Activated T-helper 2 cell treated with anti-CD3 and anti-CD28 coated beads, Interferon-gamma antibody, Interleukin-2, Interleukin-4, amounts not matched to agents 10 μg/mL and 5 μg/mL and 100 μg/mL, durations not matched to agents 14 hours and 24 hours and 36 hours (primary cell): ENCODE measurements at regions of chr11 and their contacts with region 1.

Region 1: GRCh38 chr11:118572061-118572980 is at the start of gene ARCN1:
- DNase-seq: peak; percentile 72
- H3K4me3 Mint-ChIP-seq: peak within 1 kb of the TSS; percentile 99
- H3K27ac Mint-ChIP-seq: peak within 1 kb of the TSS; percentile 97
- H3K4me1 Mint-ChIP-seq: peaks cover 29% of the 10 kb centered on the region
- H3K27me3 Mint-ChIP-seq: no peaks in the 10 kb centered on the region
- total RNA-seq, gene ARCN1: 132 and 133 TPM in 2 replicates

Region 2: GRCh38 chr11:118304568-118305248 is 267.6 kb before region 1 on chr11 and contains the start of gene CD3E:
- intact Hi-C with region 1: loop called (anchors 5 kb)
- DNase-seq: peak; percentile 64
- H3K4me3 Mint-ChIP-seq: peak within 1 kb of the TSS; percentile 89
- H3K27ac Mint-ChIP-seq: peak within 1 kb of the TSS; percentile 100
- H3K4me1 Mint-ChIP-seq: peaks cover 47% of the 10 kb centered on the region
- H3K27me3 Mint-ChIP-seq: no peaks in the 10 kb centered on the region
- total RNA-seq, gene CD3E: 518 and 529 TPM in 2 replicates

Region 3: GRCh38 chr11:118530408-118531339 is 41.6 kb before region 1 on chr11 and contains the start of gene TMEM25:
- intact Hi-C with region 1: loop called (anchors 2 kb)
- DNase-seq: peak; percentile 61
- H3K4me3 Mint-ChIP-seq: peak within 1 kb of the TSS; percentile 87
- H3K27ac Mint-ChIP-seq: peak within 1 kb of the TSS; percentile 69
- H3K4me1 Mint-ChIP-seq: peaks cover 18% of the 10 kb centered on the region
- H3K27me3 Mint-ChIP-seq: no peaks in the 10 kb centered on the region
- total RNA-seq, gene TMEM25: 9.5 and 10.1 TPM in 2 replicates

Region 4: DNA sequence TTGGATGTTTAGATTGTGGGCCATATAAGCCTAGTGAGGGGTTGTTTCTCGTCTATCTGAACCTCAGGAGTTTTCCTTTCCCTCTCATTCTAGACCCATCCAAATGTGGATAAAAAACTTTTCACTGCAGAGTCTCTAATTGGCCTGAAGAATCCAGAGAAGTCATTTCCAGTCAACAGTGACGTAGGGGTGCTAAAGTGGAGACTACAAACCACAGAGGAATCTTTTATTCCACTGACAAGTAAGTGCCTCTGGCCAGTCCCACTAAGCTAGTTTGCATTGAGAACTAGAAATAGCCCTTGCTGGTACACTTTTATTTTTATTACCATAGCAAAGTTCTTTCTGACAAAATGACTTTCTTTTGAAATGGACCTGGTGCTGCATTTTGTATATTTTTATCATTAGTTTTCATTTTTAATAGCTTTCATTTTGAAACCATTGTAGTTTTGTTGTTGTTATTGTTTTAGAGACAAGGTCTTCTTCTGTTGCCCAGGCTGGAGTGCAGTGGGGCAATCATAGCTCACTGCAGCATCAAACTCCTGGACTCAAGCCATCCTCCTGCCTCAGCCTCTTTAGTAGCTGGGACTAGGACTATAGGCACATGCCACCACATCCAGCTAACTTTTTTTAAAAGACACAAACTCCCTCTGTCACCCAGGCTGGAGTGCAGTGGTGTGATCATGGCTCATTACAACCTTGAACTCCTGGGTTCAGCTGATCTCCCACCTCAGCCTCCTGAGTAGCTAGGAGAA is 20.5 kb after region 1 on chr11:
- intact Hi-C with region 1: loop called (anchors 2 kb)
- DNase-seq: no peak
- H3K4me3 Mint-ChIP-seq: no peak overlapping the region
- H3K27ac Mint-ChIP-seq: no peak overlapping the region
- H3K4me1 Mint-ChIP-seq: peaks cover 12% of the 10 kb centered on the region
- H3K27me3 Mint-ChIP-seq: no peaks in the 10 kb centered on the region

Region 5: DNA sequence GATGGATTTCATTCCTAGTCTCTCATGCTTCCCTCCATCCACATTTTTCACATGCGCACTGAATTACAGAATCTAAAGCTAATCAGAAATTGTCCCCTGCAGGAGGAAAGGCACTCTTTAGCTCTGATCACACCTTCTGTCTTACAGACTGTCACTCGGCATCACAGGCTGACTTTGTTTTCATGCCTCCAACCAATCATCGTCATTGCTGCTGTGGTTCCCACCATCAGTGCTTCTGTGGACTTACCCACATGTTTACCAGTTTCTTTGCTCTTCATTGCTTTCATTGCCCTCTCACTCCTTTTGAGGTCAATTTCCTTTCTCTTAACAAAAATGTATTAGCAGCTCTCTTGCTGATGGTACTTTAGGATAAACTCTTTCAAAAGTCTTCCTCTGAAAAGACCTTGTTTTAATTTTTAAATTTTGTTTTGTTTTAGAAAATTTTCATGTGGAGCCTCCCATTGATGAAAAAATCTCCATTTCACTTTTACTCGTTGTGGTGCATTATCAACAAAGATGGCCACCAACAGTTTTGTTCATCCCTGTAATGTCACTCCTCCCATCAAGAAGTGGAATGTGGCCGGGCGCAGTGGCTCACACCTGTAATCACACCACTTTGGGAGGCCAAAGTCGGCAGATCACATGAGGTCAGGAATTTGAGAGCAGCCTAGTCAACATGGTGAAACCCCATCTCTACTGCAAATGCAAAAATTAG is 127.3 kb after region 1 on chr11:
- intact Hi-C with region 1: no loop called
- DNase-seq: no peak
- H3K4me3 Mint-ChIP-seq: no peak overlapping the region
- H3K27ac Mint-ChIP-seq: no peak overlapping the region
- H3K4me1 Mint-ChIP-seq: peaks cover 10% of the 10 kb centered on the region
- H3K27me3 Mint-ChIP-seq: peaks cover 2% of the 10 kb centered on the region